Naive thymus-derived CD4-positive, alpha-beta T cell (primary cell): ENCODE measurements at regions of chr3 and their contacts with region 1.

Region 1: DNA sequence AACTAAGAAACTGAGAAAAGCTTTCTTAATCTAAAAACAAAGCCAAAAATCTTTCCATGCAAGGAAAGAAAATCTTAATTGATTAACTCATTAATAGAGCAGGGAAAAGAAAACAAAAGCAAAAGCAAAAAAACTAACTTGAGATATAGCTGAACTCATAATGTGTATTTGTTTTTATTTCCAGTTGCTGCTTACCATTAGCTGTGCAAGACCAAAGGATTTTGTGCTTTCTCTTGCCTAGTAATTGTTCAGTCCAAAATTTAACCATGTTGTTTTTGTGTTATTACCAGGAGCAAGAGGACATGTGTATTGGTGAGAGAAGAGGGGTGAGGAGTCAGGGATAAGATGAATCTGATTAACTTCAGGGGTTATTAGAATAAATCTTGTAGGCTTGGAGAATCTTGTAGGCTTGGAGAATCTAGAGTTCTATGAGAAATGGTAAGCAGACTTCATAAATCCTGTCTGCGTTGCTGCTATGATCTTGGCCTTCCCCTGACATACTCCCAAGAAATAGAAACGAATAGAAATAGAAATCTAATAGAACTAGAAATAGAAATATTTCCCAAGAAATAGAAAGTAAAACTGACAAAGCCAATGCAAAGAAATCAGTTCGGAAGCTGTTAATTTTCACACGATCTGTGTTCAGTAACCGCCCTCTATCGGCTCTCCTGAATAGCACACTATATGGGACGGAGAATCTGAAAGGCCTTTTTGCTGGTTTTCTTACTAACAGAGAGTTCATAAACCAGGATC is 72.6 kb upstream of the TNFSF10 start:
- DNase-seq: peak in 7 of 9 donors; percentile 38 to 75 (median 64)
- ATAC-seq: peak; percentile 61
- H3K4me3 ChIP-seq: peak overlapping the region; percentile 44
- H3K4me3 Mint-ChIP-seq: peak overlapping the region; percentile 39 to 92 (median 86)
- H3K27ac ChIP-seq: peak overlapping the region; percentile 70
- H3K27ac Mint-ChIP-seq: peak overlapping the region; percentile 53 to 96 (median 89)
- H3K4me1 ChIP-seq: peaks cover 35% of the 10 kb centered on the region in 2 donors
- H3K4me1 Mint-ChIP-seq: peaks cover 43 to 67% (median 58%) of the 10 kb centered on the region in 7 donors
- H3K27me3 ChIP-seq: no peaks in the 10 kb centered on the region
- H3K27me3 Mint-ChIP-seq: no peaks in the 10 kb centered on the region

Region 2: DNA sequence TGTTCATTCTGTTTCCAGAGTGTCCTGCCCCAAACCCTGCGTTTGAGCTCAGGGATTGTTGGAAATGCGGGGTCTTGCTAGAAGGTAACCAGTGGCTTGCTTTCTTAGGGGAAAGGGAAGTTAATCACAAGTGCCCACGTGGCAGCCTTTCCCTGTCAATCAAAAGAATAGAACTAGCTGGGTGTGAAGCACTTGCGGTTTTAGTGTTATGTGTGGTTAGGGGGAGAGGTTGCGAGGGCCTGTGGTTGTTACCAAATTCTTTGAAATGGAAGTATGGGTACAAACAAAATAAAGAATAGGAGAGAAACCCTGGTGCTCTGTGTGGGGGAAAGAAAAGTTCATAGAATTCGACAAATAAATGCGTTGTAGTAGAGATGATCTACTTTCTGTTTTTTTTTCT is 488.8 kb before region 1 on chr3:
- CTCF ChIA-PET with region 1: no interaction called
- POLR2A ChIA-PET with region 1: no interaction called
- intact Hi-C with region 1: loop called (anchors 1 to 10 kb)
- DNase-seq: peak in 8 of 9 donors; percentile 57 to 89 (median 84)
- ATAC-seq: peak; percentile 80
- H3K4me3 ChIP-seq: peak overlapping the region; percentile 45
- H3K4me3 Mint-ChIP-seq: peak overlapping the region; percentile 78 to 89 (median 84)
- H3K27ac ChIP-seq: peak overlapping the region; percentile 54
- H3K27ac Mint-ChIP-seq: peak overlapping the region; percentile 88 to 94 (median 91)
- H3K4me1 ChIP-seq: peaks cover 44 to 73% of the 10 kb centered on the region in 2 donors
- H3K4me1 Mint-ChIP-seq: peaks cover 65 to 91% (median 82%) of the 10 kb centered on the region in 7 donors
- H3K27me3 ChIP-seq: no peaks in the 10 kb centered on the region
- H3K27me3 Mint-ChIP-seq: peaks cover 0 to 8% (median 0%) of the 10 kb centered on the region in 5 donors

Region 3: GRCh38 chr3:172189987-172190603 is 405.7 kb before region 1 on chr3:
- CTCF ChIA-PET with region 1: no interaction called
- POLR2A ChIA-PET with region 1: no interaction called
- intact Hi-C with region 1: no loop called
- DNase-seq: no peak
- ATAC-seq: no peak
- H3K4me3 ChIP-seq: no peak overlapping the region
- H3K4me3 Mint-ChIP-seq: no peak overlapping the region
- H3K27ac ChIP-seq: no peak overlapping the region
- H3K27ac Mint-ChIP-seq: no peak overlapping the region
- H3K4me1 ChIP-seq: no peaks in the 10 kb centered on the region
- H3K4me1 Mint-ChIP-seq: peaks cover 6 to 31% (median 13%) of the 10 kb centered on the region in 7 donors
- H3K27me3 ChIP-seq: no peaks in the 10 kb centered on the region
- H3K27me3 Mint-ChIP-seq: peaks cover 0 to 2% (median 0%) of the 10 kb centered on the region in 5 donors

Region 4: GRCh38 chr3:172461530-172462138 is 134.2 kb before region 1 on chr3:
- CTCF ChIA-PET with region 1: interaction called, 10 read pairs
- POLR2A ChIA-PET with region 1: no interaction called
- intact Hi-C with region 1: loop called in 1 of 2 experiments (anchors 1 kb)
- DNase-seq: peak in 4 of 9 donors; percentile 23 to 37 (median 30)
- ATAC-seq: peak; percentile 77
- H3K4me3 ChIP-seq: no peak overlapping the region
- H3K4me3 Mint-ChIP-seq: no peak overlapping the region
- H3K27ac ChIP-seq: no peak overlapping the region
- H3K27ac Mint-ChIP-seq: no peak overlapping the region
- H3K4me1 ChIP-seq: no peaks in the 10 kb centered on the region
- H3K4me1 Mint-ChIP-seq: no peaks in the 10 kb centered on the region
- H3K27me3 ChIP-seq: no peaks in the 10 kb centered on the region
- H3K27me3 Mint-ChIP-seq: peaks cover 0 to 7% (median under 1%) of the 10 kb centered on the region in 5 donors

Region 5: DNA sequence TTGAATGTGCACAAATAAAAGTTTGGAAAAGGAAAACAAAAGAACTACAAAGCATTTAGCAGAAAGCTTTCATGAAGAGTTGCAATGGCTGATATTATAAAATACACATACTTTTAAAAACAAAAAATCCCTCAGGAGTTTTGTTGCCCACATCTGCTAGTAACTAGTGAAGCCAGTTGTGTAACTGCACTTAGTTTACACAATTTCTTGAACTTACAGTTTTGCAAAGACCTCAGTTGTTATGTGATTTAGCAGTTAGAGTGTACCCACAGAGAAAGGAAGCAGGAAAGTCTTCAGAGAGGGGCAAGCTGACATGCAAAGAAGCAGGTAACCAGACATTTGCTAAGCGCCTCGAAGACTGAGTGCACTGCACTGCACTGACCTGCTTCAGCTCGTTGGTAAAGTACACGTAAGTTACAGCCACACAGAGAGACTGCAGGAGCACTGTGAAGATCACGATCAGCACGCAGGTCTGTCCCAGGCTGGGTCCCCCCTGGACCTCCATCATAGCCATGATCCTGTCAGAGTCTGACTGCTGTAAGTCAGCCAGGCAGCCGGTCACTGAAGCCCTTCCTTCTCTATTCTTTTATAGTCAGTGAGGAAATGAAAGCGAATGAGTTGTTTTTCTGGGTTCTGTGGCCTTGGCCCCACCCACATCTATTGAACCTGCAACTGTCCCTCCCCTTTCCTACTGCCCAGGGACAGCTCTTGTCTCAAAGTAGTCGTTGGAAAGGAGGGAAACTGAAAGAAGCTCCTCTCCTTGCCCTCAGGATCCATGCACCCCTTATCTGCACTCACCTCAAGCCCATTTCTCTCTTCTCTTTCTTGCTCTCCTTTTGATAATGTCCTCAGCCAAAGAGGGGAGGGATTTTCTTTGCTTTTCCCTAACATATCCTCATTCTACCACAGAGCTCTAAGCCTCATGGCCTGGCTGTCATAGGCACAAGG is 72.7 kb before region 1 on chr3 and contains the start of gene TNFSF10:
- CTCF ChIA-PET with region 1: interaction called, 17 read pairs
- POLR2A ChIA-PET with region 1: interaction called, 54 read pairs
- intact Hi-C with region 1: loop called (anchors 1 kb)
- DNase-seq: peak; percentile 19 to 71 (median 60)
- ATAC-seq: peak; percentile 87
- H3K4me3 ChIP-seq: peak within 1 kb of the TSS; percentile 86
- H3K4me3 Mint-ChIP-seq: peak within 1 kb of the TSS; percentile 89 to 100 (median 96)
- H3K27ac ChIP-seq: peak within 1 kb of the TSS; percentile 85
- H3K27ac Mint-ChIP-seq: peak within 1 kb of the TSS; percentile 88 to 100 (median 99)
- H3K4me1 ChIP-seq: peaks cover 26 to 34% of the 10 kb centered on the region in 2 donors
- H3K4me1 Mint-ChIP-seq: peaks cover 36 to 63% (median 53%) of the 10 kb centered on the region in 7 donors
- H3K27me3 ChIP-seq: no peaks in the 10 kb centered on the region
- H3K27me3 Mint-ChIP-seq: no peaks in the 10 kb centered on the region
- total RNA-seq, gene TNFSF10: 10.8 to 234 (median 45.0) TPM

Region 6: GRCh38 chr3:172562871-172563863 is 32.6 kb before region 1 on chr3:
- CTCF ChIA-PET with region 1: interaction called, 3 read pairs
- POLR2A ChIA-PET with region 1: no interaction called
- intact Hi-C with region 1: loop called in 1 of 2 experiments (anchors 1 kb)
- DNase-seq: peak in 3 of 9 donors; percentile 19 to 38 (median 22)
- ATAC-seq: peak; percentile 26
- H3K4me3 ChIP-seq: peak overlapping the region; percentile 26
- H3K4me3 Mint-ChIP-seq: peak overlapping the region in 9 of 10 donors; percentile 36 to 82 (median 66)
- H3K27ac ChIP-seq: no peak overlapping the region
- H3K27ac Mint-ChIP-seq: peak overlapping the region; percentile 22 to 92 (median 77)
- H3K4me1 ChIP-seq: peaks cover 0 to 15% of the 10 kb centered on the region in 2 donors
- H3K4me1 Mint-ChIP-seq: peaks cover 15 to 54% (median 26%) of the 10 kb centered on the region in 7 donors
- H3K27me3 ChIP-seq: no peaks in the 10 kb centered on the region
- H3K27me3 Mint-ChIP-seq: no peaks in the 10 kb centered on the region

Region 7: GRCh38 chr3:172622916-172623700 is 27.3 kb after region 1 on chr3:
- CTCF ChIA-PET with region 1: interaction called, 4 read pairs
- POLR2A ChIA-PET with region 1: no interaction called
- intact Hi-C with region 1: loop called in 1 of 2 experiments (anchors 1 kb)
- DNase-seq: peak in 7 of 9 donors; percentile 16 to 48 (median 34)
- ATAC-seq: peak; percentile 75
- H3K4me3 ChIP-seq: no peak overlapping the region
- H3K4me3 Mint-ChIP-seq: peak overlapping the region in 8 of 10 donors; percentile 37 to 71 (median 50)
- H3K27ac ChIP-seq: no peak overlapping the region
- H3K27ac Mint-ChIP-seq: no peak overlapping the region
- H3K4me1 ChIP-seq: no peaks in the 10 kb centered on the region
- H3K4me1 Mint-ChIP-seq: peaks cover 0 to 12% (median 6%) of the 10 kb centered on the region in 7 donors
- H3K27me3 ChIP-seq: no peaks in the 10 kb centered on the region
- H3K27me3 Mint-ChIP-seq: no peaks in the 10 kb centered on the region

Region 8: GRCh38 chr3:172750368-172751174 is 154.8 kb after region 1 on chr3 and contains the start of gene ECT2:
- CTCF ChIA-PET with region 1: no interaction called
- POLR2A ChIA-PET with region 1: no interaction called
- intact Hi-C with region 1: loop called (anchors 1 kb)
- DNase-seq: peak; percentile 87 to 98 (median 94)
- ATAC-seq: peak; percentile 98
- H3K4me3 ChIP-seq: peak within 1 kb of the TSS; percentile 88
- H3K4me3 Mint-ChIP-seq: peak within 1 kb of the TSS; percentile 88 to 100 (median 96)
- H3K27ac ChIP-seq: peak within 1 kb of the TSS; percentile 63
- H3K27ac Mint-ChIP-seq: peak within 1 kb of the TSS; percentile 52 to 98 (median 85)
- H3K4me1 ChIP-seq: peaks cover 5% of the 10 kb centered on the region in 2 donors
- H3K4me1 Mint-ChIP-seq: peaks cover 6 to 45% (median 15%) of the 10 kb centered on the region in 7 donors
- H3K27me3 ChIP-seq: no peaks in the 10 kb centered on the region
- H3K27me3 Mint-ChIP-seq: peaks cover 0 to 8% (median 0%) of the 10 kb centered on the region in 5 donors
- total RNA-seq, gene ECT2: 1.3 to 41.2 (median 2.1) TPM